Colonic mucosa (tissue), 4 donors: ENCODE measurements at regions of chr12 and their contacts with region 1.

Region 1: DNA sequence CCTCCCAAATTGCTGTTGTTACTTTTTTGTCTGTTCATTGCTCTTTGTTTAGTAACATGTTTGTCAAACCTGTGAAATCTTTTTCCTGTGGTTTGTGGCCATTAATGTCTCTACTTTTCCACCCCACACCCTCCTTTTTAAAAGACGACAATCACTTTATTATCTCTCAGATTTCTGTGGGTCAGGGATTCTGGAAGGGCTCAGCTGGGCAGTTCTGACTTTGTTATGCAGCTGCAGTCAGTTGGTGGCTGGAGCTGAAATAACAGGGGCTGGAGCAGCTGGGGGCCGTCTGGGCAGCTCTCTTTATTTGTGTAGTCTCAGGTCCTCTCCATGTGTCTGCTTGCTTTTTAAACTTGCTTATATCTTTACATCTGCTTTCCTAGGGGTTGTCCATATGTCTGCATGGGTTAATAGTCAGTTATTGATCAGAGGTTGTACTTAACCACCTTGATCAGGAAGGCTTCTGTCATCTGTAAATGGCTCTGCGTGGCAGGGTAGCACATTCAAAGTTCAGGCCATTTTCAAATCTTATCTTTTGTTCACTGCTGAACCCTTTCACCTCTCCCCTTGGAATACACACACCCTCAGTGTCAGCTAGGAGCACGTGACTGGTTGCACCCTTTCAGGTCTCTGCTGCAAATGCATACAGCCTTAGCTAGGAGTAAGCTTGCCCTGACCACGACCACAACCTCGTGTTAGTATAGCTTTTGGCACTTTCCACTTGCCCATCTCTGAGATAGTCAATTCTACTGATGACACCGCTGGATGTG is 27.9 kb downstream of the BORCS5 start:
- DNase-seq: peak; percentile 64
- H3K4me3 ChIP-seq: no peak overlapping the region
- H3K27ac ChIP-seq: no peak overlapping the region
- H3K4me1 ChIP-seq: peaks cover 4% of the 10 kb centered on the region
- H3K27me3 ChIP-seq: no peaks in the 10 kb centered on the region
- CTCF ChIP-seq: no peak

Region 2: DNA sequence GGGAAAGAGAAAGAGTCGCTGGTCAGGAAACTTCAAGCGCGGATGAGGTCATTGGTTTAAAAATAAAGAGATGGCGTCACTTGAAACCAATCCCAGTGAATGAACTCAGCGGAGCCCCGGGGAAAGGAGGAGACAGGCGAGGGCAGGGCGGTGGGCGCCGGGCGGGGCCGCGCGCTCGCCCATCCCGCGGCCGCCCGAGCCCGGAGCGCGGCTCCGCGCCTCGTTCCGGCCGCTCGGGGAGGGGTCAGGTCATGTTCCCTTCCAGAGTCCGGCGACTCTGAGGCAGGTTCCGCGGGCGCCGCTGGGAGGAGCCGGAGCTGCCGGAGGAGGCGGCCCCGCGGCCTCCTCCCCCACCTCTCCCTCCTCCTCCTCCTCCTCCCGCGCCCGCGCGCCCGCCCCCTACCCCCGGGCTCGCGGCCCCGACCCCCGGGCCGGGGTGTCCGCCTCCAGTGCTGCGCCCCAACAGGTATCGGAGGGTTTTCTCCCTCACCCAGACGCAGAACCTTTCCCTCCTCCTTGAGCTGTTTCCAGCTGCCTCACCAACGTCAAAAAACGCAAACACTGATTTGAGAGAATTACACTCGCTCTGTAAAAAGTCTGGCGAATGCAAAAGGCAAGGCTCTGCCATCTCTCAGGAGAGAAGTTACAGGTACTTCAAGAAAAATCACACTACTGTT is 178.0 kb after region 1 on chr12 and contains the start of gene DUSP16:
- intact Hi-C with region 1: loop called (anchors 10 kb)
- DNase-seq: peak; percentile 95
- H3K4me3 ChIP-seq: peak within 1 kb of the TSS; percentile 51
- H3K27ac ChIP-seq: peak within 1 kb of the TSS; percentile 96
- H3K4me1 ChIP-seq: no peaks in the 10 kb centered on the region
- H3K27me3 ChIP-seq: no peaks in the 10 kb centered on the region
- CTCF ChIP-seq: no peak
- total RNA-seq, gene DUSP16: 47.5 to 60.2 TPM